ENCODE measurements at regions of chr6 and their contacts with region 1.

Region 1: GRCh38 chr6:125294925-125295324 is 6.8 kb downstream of the HDDC2 start:
- DNase-seq: no peak

Region 2: DNA sequence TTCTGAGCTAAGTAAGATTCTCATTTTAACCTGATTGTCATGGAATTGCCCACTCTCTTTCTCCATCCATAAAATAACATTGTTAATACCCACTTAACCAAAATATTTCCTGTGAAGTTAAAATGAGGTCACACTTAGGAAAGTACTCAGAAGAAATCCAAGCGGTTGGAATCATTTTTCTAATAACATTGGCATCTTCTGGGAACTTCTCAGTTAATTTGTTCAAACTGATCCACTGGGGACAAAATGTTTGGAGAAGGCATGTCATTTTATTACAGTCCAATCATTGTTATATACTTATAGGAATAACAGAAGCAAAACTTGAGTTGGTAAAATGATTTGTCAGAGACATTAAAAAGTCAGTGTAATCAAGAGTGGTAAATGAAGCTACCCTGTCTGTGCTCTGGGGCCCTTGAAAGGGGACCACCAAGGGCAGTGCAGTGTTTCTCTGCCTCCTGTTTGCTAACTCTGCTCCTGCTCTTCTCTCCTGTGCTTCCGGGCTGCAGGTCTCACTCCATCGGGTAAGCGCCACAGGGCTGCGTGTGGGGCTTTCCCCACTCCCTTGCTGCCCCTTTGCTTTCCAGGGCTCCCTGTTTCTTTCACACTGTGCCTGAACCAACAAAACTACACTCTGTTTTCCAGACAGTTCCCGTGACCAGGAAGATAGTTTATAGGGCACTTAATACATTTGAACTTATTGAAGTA is 43.3 kb before region 1 on chr6:
- intact Hi-C with region 1: loop called (anchors 5 kb)
- DNase-seq: no peak

Region 3: DNA sequence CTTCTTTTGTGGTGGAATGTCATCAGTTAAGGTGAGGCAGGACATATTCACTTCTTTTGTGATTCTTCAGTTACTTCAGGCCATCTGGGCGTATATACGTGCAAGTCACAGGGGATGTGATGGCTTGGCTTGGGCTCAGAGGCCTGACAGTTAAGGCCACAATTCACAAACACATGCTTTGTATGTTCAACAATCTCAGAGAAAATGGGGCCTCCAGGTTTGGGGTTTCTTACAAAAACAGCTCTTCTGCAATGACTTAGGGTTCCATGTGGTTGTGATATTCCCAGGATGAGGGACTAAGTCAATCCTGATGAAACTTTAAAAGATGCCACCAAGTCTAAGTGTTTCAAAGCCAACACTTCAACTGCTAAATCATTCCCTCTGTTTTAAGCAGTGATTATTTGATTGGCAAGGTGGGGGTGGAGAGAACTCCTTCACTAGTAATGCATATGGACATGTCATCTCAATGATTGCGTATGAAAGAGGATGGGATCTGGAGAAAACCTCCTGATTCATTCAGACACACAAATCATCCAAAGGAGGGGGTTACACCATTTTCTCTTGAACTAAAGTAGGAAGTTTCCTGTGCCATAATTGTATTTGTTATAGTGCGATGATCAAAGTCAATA is 412.8 kb after region 1 on chr6:
- intact Hi-C with region 1: no loop called
- DNase-seq: no peak

Measured in cardiac septum (tissue), 1 donor.